ENCODE measurements at regions of chr2 and their contacts with region 1.

Region 1: DNA sequence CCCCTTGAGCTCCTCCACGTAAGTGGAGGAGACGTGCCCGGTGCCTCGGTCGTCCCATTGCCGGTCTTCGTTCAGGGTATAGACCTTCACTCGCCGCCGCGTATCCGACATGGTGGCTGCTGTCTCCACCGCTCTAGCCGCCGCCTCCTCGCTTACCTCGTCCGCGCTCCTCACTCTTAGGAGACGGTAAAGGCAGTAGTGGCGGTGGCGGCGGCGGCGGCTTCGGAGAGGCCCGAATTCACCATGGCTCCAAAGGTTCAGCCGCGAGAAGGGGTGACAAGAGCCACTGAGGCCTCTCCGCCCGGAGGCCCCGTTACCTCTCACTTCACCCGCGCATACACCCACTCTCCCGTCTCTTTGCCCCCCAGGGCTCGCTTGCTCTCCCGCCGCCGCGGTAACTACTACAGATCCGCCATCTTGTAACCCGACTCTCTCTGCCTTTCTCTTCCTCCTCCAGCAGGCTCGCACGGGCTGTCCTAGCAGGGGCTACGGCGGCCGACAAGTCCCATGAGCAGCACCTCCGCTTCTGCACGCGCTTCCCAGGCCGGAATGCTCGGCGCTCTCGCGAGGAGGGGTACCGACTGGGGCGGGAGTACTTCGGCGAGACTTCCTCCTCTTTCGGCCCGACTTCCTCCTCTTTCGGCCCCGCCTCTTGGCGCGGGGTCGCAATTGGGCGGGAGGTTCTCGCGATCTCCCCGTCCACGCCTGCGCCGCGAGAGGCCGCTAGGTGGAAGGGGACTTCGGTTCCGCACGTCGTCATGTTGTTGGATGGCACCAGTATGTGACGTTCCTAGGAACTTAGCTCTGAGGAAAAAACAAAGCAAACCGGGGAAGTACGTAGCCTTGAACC is at the start of gene PPP4R3B:
- DNase-seq: peak; percentile 99 to 100
- H3K4me3 ChIP-seq: peak within 1 kb of the TSS; percentile 79 to 100 (median 98)
- H3K27ac ChIP-seq: peak within 1 kb of the TSS; percentile 92 to 96 (median 95)
- H3K4me1 ChIP-seq: peaks cover 29 to 34% of the 10 kb centered on the region in 2 donors
- H3K27me3 ChIP-seq: no peaks in the 10 kb centered on the region
- CTCF ChIP-seq: peak in 5 of 6 experiments; percentile 9 to 78 (median 70)
- POLR2A ChIP-seq: peak; percentile 62 to 99
- total RNA-seq, gene PPP4R3B: 76.2 to 88.0 (median 82.6) TPM

Region 2: GRCh38 chr2:55519938-55520885 is 97.2 kb before region 1 on chr2:
- intact Hi-C with region 1: loop called (anchors 10 kb)
- DNase-seq: peak; percentile 36 to 39
- H3K4me3 ChIP-seq: peak overlapping the region; percentile 81 to 92 (median 86)
- H3K27ac ChIP-seq: peak overlapping the region; percentile 56 to 91 (median 83)
- H3K4me1 ChIP-seq: peaks cover 6 to 7% of the 10 kb centered on the region in 2 donors
- H3K27me3 ChIP-seq: no peaks in the 10 kb centered on the region
- CTCF ChIP-seq: no peak
- POLR2A ChIP-seq: no peak

Measured in thyroid gland (tissue), 4 donors.